Esophagus muscularis mucosa (tissue), 4 donors: ENCODE measurements at regions of chr3 and their contacts with region 1.

Region 1: GRCh38 chr3:48739955-48740823 is 23.2 kb upstream of the IP6K2 start:
- DNase-seq: peak; percentile 95
- H3K4me3 ChIP-seq: peak overlapping the region in 3 of 4 donors; percentile 8 to 32 (median 31)
- H3K27ac ChIP-seq: peak overlapping the region; percentile 65 to 72 (median 69)
- H3K4me1 ChIP-seq: peaks cover 44 to 60% (median 48%) of the 10 kb centered on the region in 4 donors
- H3K27me3 ChIP-seq: no peaks in the 10 kb centered on the region
- CTCF ChIP-seq: peak; percentile 83 to 99 (median 88)
- EP300 ChIP-seq: no peak
- POLR2A ChIP-seq: no peak

Region 2: DNA sequence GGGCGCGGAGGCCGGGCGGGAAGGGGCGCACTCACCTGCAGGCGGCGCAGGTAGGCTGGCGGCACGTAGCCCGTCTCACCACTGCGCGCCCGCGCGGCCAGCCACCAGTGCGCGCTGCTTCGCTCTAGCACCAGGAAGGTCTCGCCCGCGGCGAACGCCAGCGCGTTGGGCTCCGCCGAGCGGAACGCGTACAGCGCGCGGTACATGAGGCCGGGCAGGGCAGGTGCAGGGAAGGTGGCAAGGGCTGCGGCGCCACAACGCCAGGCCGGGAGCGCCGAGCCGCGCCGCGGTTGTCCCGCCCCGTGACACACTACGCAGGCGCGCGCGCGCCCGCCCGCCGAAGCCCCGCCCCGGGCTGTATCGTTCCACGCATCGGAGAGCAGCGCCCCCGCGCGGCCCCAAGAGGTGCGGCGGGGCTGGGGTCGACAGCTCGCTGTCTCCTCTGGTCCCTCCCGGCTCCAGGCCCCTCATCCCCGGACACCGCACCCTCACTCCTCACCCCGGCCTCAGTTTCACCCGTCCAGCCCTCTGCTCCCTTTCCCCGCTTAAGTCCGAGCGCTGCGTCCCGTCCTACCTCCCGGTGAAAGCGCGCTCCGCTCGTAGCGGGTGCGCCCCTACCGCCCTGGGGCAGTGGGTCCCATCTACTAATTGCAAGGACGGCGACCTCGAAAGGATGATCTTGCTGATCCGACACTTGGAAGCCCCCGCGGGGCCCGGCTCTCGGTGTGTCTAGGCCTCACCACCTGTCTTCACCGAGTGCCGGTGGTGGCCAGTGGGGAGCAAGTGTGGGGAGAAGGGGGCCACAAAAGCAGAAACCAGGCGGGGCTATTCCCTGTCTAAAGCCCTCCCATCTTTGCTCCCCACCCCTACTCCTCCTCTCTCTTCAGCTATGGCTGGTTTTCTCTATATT is 54.3 kb before region 1 on chr3 and contains the start of gene NCKIPSD:
- intact Hi-C with region 1: loop called (anchors 5 kb)
- DNase-seq: peak; percentile 94
- H3K4me3 ChIP-seq: peak within 1 kb of the TSS; percentile 81 to 98 (median 86)
- H3K27ac ChIP-seq: peak within 1 kb of the TSS; percentile 80 to 87 (median 86)
- H3K4me1 ChIP-seq: peaks cover 38 to 54% (median 49%) of the 10 kb centered on the region in 4 donors
- H3K27me3 ChIP-seq: no peaks in the 10 kb centered on the region
- CTCF ChIP-seq: peak; percentile 80 to 89 (median 89)
- EP300 ChIP-seq: no peak
- POLR2A ChIP-seq: peak; percentile 20
- total RNA-seq, gene NCKIPSD: 18.9 to 34.7 (median 29.1) TPM